ENCODE measurements at regions of chr9 and their contacts with region 1.

Region 1: GRCh38 chr9:994005-994404 is 17.6 kb downstream of the DMRT3 start:
- DNase-seq: no peak

Region 2: GRCh38 chr9:893843-894420 is 100.1 kb before region 1 on chr9:
- intact Hi-C with region 1: loop called in 1 of 2 experiments (anchors 10 kb)
- DNase-seq: no peak

Region 3: DNA sequence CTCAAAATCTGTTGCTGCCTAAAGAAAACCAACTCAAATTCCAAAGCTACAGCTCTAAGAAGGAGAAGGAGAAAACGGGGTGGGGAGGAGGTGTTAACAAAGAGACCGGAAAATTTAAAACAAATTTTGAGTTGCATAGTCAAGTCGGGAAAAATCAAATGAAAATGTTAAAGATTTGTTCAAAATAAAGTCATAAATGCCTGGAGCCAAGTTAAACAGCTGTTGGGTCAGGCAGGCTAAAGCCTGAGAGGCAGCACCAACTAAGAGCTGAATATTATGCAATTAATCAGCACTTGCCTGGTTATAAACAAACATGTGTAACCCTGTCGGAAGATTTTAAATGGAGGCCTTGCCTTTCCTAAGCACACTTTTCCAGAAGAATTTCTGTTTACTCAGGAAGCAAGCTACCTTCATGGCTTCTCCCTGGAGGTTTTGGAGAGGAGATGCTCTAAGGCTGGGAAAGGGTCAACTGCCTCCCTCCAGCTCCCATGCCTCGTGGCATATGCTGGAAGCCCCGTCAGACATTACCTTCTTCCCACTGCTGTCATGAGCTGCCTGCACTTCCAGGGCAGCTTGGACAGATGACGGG is 326.7 kb after region 1 on chr9:
- intact Hi-C with region 1: loop called in 1 of 2 experiments (anchors 5 kb)
- DNase-seq: no peak

Region 4: DNA sequence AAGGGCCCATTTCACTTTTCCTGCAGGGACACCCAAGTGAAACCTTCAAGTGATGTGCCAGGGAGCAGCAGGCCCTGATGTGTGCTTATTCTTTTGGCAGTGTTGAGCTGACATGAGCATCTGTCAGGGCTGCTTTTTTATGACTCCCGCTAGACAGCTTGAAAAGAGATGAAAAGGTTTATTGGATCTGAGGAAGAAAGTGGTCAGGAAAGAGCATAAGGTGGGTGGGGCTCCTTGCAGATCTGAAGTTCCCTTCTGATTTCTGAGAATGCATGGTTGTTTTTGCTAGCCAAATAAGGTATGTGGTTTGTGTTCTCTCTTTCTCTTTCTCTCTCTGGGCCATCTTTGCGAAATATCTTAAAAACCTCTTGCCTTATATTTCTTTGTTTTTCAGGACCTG is 372.3 kb after region 1 on chr9:
- intact Hi-C with region 1: no loop called
- DNase-seq: no peak